ENCODE measurements at regions of chr6 and their contacts with region 1.

Region 1: GRCh38 chr6:73180763-73181619 is 44.3 kb downstream of the KHDC1L start:
- DNase-seq: peak in 1 of 2 experiments; percentile 17
- H3K4me3 ChIP-seq: no peak overlapping the region
- H3K4me3 Mint-ChIP-seq: no peak overlapping the region
- H3K27ac Mint-ChIP-seq: no peak overlapping the region
- H3K4me1 ChIP-seq: no peaks in the 10 kb centered on the region
- H3K4me1 Mint-ChIP-seq: no peaks in the 10 kb centered on the region
- H3K27me3 ChIP-seq: no peaks in the 10 kb centered on the region
- H3K27me3 Mint-ChIP-seq: peaks cover 4% of the 10 kb centered on the region
- CTCF ChIP-seq: peak; percentile 58 to 86

Region 2: DNA sequence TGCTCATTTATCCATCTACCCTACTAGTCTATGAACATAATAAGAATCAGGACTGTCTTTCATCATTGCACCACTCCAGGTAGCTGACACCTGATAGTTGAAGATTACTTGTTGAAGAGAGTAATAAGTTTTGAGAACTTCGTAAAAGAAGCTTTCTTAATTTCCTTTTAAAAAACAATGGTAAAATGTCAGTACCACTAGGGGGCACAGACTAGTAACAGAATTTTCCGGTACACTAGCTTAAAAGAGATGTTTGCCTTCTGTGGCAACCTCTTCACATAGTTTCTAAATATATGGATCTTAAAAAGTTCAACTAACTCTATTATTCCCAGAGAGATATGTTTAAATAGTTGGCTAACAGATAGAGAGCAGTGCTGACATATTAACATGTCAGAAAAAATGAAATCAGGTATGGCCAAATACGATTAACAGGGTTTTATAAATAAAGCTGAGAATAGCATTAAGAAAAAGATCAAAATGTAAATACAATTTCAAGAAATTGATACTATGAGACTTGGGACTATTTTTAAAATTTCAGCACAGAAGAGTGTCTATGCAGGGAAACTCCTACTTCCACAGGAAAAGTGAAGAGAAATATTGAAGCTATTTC is 564.5 kb before region 1 on chr6:
- CTCF ChIA-PET with region 1: no interaction called
- POLR2A ChIA-PET with region 1: no interaction called
- intact Hi-C with region 1: loop called (anchors 1 kb)
- DNase-seq: no peak
- H3K4me3 ChIP-seq: no peak overlapping the region
- H3K4me3 Mint-ChIP-seq: no peak overlapping the region
- H3K27ac Mint-ChIP-seq: no peak overlapping the region
- H3K4me1 ChIP-seq: no peaks in the 10 kb centered on the region
- H3K4me1 Mint-ChIP-seq: peaks cover 7% of the 10 kb centered on the region
- H3K27me3 ChIP-seq: no peaks in the 10 kb centered on the region
- H3K27me3 Mint-ChIP-seq: peaks cover 19% of the 10 kb centered on the region
- CTCF ChIP-seq: peak; percentile 52 to 57

Region 3: DNA sequence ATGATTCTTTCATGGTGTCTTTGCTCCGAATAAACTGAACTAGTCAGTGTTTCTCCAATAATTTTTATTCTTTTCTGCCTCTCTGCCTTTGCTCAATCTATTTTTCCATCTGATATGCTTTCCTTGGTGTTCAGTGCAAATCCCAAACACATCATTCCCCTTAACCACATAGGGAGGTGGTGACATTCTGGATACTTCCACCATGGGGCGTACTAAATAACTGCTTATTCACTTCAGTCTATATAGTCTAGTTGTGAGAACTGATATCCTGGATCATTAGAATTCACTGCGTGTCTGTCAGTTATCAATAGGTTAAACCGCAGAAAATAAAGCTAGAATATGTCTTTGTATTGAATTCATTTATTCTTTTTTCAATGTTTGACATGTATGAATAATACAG is 476.0 kb before region 1 on chr6:
- CTCF ChIA-PET with region 1: no interaction called
- POLR2A ChIA-PET with region 1: no interaction called
- intact Hi-C with region 1: loop called (anchors 1 kb)
- DNase-seq: peak in 1 of 2 experiments; percentile 16
- H3K4me3 ChIP-seq: no peak overlapping the region
- H3K4me3 Mint-ChIP-seq: no peak overlapping the region
- H3K27ac Mint-ChIP-seq: no peak overlapping the region
- H3K4me1 ChIP-seq: no peaks in the 10 kb centered on the region
- H3K4me1 Mint-ChIP-seq: no peaks in the 10 kb centered on the region
- H3K27me3 ChIP-seq: no peaks in the 10 kb centered on the region
- H3K27me3 Mint-ChIP-seq: peaks cover 9% of the 10 kb centered on the region
- CTCF ChIP-seq: peak in 1 of 2 experiments; percentile 35

Measured in Caco-2 (cell line).